SK-N-SH (cell line): ENCODE measurements at regions of chr12 and their contacts with region 1.

Region 1: DNA sequence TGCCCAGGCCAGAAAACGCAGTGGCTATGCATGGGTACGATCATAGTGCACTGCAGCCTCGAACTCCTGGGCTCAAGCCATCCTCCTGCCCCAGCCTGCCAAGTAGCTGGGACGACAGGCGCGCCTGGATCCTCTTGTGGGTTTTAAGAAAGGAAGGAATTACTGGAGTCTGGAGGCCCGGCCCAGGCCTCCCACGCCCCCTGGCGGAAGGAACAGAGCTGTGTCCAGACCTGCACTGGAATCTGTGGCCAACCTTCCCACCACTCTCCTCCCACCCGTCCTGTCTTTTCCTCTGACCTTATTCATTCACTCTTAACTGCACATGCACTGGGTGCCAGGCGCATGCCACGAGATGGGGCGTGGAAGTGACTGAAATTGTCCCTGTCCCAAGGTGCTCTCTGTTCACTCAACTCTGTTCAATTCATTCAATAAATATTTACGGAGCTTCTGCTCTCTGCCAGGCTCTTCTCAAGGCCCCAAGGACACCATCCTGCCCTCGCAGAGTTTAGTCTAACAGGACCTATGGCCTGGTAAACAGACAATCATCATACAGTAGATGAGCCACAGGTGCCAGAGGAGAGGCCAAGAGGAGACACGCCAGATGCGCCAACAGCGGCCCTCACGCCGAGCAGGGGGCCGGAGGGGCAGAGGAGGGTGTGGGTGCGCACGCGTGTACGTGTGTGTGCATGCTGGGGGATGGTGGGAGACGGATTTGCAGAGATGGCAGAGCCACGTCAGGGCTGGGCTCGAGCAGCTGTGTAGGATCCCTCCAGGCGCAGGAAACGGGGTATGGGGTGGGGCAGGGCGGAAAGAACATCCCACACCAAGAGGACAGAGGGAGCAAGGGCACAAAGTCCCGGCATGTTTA is 13.7 kb upstream of the TMEM106C start:
- DNase-seq: peak; percentile 90
- H3K4me3 ChIP-seq: no peak overlapping the region
- H3K27ac ChIP-seq: no peak overlapping the region
- H3K4me1 ChIP-seq: peaks cover 0 to 15% of the 10 kb centered on the region in 2 experiments; a peak in 1 of 4 replicates
- H3K27me3 ChIP-seq: peaks cover 5% of the 10 kb centered on the region; the same call in 1 of the 2 replicates
- CTCF ChIP-seq: peak; percentile 88
- EP300 ChIP-seq: no peak
- RAD21 ChIP-seq: peak; percentile 83

Region 2: DNA sequence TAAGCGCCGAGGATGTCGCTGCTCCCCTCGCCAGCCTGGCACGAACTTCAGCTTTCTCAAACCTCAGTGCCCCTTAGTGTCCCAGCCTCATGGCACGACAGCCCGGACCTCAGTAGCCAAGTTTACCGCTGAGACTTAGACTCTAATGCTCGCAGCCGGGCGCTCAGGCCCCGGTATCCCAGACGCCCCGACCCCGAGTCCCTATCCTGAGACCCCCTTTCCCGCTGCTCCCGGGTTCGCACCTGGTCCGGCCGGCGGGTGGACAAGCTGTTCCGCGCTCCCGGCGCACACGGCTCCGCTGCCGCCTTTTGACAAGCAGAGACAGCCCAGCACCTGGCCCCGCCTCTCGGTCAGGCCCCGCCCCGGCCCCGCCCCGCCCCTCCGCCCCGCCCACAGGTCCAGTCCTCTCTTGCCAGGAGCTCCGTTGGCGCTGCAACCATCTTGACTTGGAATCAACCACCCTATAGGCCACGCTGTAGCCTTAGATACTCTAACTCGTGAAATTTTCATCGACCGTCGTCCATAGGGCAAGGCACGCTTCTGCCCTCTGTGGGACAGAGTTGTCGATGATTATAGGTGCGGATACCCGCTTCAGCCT is 44.9 kb before region 1 on chr12 and contains the start of gene VDR:
- CTCF ChIA-PET with region 1: interaction called, 70 read pairs
- POLR2A ChIA-PET with region 1: no interaction called
- DNase-seq: peak; percentile 93
- H3K4me3 ChIP-seq: peak within 1 kb of the TSS; percentile 51 to 73
- H3K27ac ChIP-seq: no peak within 1 kb of the TSS; a peak in 1 of 4 replicates
- H3K4me1 ChIP-seq: peaks cover 7 to 18% of the 10 kb centered on the region in 2 experiments; a peak in 2 of 4 replicates
- H3K27me3 ChIP-seq: peaks cover 11% of the 10 kb centered on the region
- CTCF ChIP-seq: no peak; the same call in 1 of the 2 replicates
- EP300 ChIP-seq: no peak
- RAD21 ChIP-seq: peak; percentile 21; the same call in 1 of the 2 replicates
- polyA plus RNA-seq, gene VDR: 0.29 and 0.33 TPM in 2 replicates

Region 3: DNA sequence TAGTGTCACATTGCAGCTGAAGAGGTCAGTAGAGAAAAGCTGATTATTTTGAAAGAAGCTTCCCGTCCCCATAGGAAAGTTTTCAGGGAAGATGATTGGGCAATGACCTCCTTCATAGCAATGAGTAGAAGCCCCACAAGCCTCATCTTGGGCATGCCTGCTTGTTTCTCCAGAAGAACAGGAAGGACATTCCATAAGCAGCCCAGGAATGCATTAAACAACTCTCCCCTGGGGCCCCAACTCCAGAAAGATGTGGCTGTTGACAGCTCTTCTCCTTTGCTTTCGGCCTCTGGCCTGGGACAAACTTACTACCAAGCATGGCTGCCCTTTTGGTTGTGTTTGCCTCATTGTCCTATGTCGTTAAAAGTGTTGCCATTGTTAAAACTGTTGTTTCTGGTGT is 39.2 kb before region 1 on chr12:
- CTCF ChIA-PET with region 1: interaction called, 70 read pairs
- POLR2A ChIA-PET with region 1: no interaction called
- DNase-seq: no peak
- H3K4me3 ChIP-seq: no peak overlapping the region
- H3K27ac ChIP-seq: no peak overlapping the region
- H3K4me1 ChIP-seq: peaks cover 0 to 2% of the 10 kb centered on the region in 2 experiments; a peak in 1 of 4 replicates
- H3K27me3 ChIP-seq: peaks cover 11% of the 10 kb centered on the region
- CTCF ChIP-seq: no peak
- EP300 ChIP-seq: no peak
- RAD21 ChIP-seq: no peak

Region 4: DNA sequence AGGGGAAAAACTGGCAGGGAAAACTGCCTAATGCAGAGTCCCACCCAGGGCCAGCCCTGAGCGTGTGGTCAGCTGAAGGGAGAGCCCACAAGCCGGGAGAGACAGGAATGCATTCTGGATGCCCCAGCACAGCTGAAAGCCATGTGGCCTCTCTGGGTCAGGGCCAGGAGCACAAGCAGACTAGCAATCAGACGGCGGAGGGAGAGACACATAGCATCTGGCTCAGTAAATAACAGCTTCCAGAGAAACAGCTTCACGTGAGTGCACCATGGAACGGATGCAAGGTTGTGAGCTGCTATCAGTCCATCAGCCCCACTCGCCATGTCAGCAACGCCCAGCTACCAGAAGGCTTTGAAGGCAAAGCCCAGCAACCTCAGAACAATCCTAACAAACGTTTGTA is 14.5 kb before region 1 on chr12:
- CTCF ChIA-PET with region 1: interaction called, 34 read pairs
- POLR2A ChIA-PET with region 1: no interaction called
- DNase-seq: peak; percentile 80
- H3K4me3 ChIP-seq: no peak overlapping the region
- H3K27ac ChIP-seq: peak overlapping the region in 1 of 2 experiments; percentile 84; a peak in 2 of 4 replicates
- H3K4me1 ChIP-seq: peaks cover 0 to 16% of the 10 kb centered on the region in 2 experiments; a peak in 2 of 4 replicates
- H3K27me3 ChIP-seq: no peaks in the 10 kb centered on the region; the same call in 1 of the 2 replicates
- CTCF ChIP-seq: no peak
- EP300 ChIP-seq: peak in 1 of 2 experiments; percentile 41; a peak in 1 of 4 replicates
- RAD21 ChIP-seq: peak; percentile 7; the same call in 1 of the 2 replicates

Region 5: GRCh38 chr12:47963340-47964040 is 13.8 kb after region 1 on chr12 and contains the start of gene TMEM106C:
- CTCF ChIA-PET with region 1: interaction called, 89 read pairs
- POLR2A ChIA-PET with region 1: no interaction called
- DNase-seq: peak; percentile 99
- H3K4me3 ChIP-seq: peak within 1 kb of the TSS; percentile 94 to 97
- H3K27ac ChIP-seq: peak within 1 kb of the TSS in 1 of 2 experiments; percentile 77; a peak in 1 of 4 replicates
- H3K4me1 ChIP-seq: peaks cover 0 to 6% of the 10 kb centered on the region in 2 experiments; a peak in 1 of 4 replicates
- H3K27me3 ChIP-seq: no peaks in the 10 kb centered on the region
- CTCF ChIP-seq: peak; percentile 92
- EP300 ChIP-seq: no peak
- RAD21 ChIP-seq: peak; percentile 71
- polyA plus RNA-seq, gene TMEM106C: 133 and 173 TPM in 2 replicates

Region 6: GRCh38 chr12:47990351-47991105 is 40.9 kb after region 1 on chr12:
- CTCF ChIA-PET with region 1: interaction called, 11 read pairs
- POLR2A ChIA-PET with region 1: no interaction called
- DNase-seq: no peak
- H3K4me3 ChIP-seq: no peak overlapping the region
- H3K27ac ChIP-seq: peak overlapping the region in 1 of 2 experiments; percentile 97; a peak in 2 of 4 replicates
- H3K4me1 ChIP-seq: peaks cover 0 to 43% of the 10 kb centered on the region in 2 experiments; a peak in 2 of 4 replicates
- H3K27me3 ChIP-seq: peaks cover 18% of the 10 kb centered on the region
- CTCF ChIP-seq: no peak
- EP300 ChIP-seq: no peak
- RAD21 ChIP-seq: no peak